Dorsolateral prefrontal cortex (tissue), 120 donors: ENCODE measurements at regions of chr7 and their contacts with region 1.

Region 1: GRCh38 chr7:134140889-134141867 is 14.0 kb downstream of the LRGUK start:
- DNase-seq: peak; percentile 64 to 84 (median 78)
- H3K4me3 ChIP-seq: peak overlapping the region in 44 of 59 donors; percentile 5 to 62 (median 38)
- H3K27ac ChIP-seq: no peak overlapping the region
- H3K27me3 ChIP-seq: no peaks in the 10 kb centered on the region
- CTCF ChIP-seq: peak in 55 of 56 donors; percentile 71 to 96 (median 89)

Region 2: DNA sequence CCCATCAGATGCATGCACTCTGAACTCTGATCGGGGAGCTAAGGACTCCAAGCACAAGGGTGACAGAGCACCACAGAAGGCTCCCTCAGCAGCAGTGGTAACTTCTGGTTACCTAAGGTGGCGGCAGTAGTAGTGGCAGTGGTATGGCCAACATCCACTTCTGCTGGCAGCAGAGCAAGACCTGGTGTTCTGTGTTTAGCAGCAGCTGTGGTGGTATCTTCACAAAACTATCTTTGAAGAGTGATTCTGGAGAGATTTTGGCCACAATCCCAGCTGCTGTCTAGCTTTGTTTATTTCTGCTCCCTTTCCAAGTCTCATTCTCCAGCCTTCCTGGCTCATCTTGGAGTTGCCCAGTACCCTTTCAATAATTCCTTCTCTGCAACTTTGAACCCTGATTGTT is 116.4 kb before region 1 on chr7:
- intact Hi-C with region 1: loop called in 1 of 2 experiments (anchors 5 kb)
- DNase-seq: no peak
- H3K4me3 ChIP-seq: no peak overlapping the region
- H3K27ac ChIP-seq: no peak overlapping the region
- H3K27me3 ChIP-seq: no peaks in the 10 kb centered on the region
- CTCF ChIP-seq: no peak

Region 3: DNA sequence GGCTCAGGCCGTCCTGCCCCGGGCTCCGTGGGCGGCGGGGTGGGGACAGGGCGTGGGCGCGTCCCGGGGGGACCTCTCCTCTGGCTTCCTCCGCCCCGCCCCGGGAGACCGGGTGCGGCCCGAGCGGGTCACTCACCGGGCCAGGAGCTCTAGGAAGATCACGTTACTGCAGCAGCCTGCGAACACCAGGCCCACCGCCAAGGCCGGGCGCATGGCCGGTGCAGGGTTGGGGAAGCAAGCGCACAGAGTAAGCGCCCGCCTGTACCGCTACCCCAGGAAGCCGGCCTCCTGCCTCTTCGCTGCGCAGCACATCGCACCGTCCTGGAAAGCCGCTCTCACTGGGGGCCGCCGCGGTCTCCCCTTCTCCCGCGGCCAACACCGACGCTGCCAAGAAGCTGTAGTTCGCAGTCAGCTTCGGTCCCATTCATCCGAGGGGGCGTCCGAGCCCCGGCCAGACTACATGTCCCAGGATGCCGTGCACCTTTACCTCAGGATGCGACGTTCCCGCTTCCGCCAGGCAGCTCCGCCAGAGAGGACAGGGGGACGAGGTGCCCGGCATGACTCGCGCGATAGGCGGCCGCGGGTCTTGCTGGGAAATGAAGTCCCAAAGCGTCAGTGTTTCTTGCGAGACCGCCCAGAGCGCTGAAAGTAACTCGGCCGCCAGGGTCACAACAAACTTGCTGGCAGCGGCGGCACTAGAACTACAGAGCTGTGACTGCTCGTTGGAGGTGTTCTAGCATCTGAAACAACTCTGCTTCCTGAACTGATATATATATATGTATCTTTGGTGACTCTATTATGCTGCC is 175.6 kb after region 1 on chr7 and contains the start of gene SLC35B4:
- intact Hi-C with region 1: loop called in 1 of 2 experiments (anchors 10 kb)
- DNase-seq: peak; percentile 96 to 99 (median 98)
- H3K4me3 ChIP-seq: peak within 1 kb of the TSS; percentile 64 to 100 (median 93)
- H3K27ac ChIP-seq: peak within 1 kb of the TSS in 57 of 59 donors; percentile 2 to 91 (median 79)
- H3K27me3 ChIP-seq: no peaks in the 10 kb centered on the region
- CTCF ChIP-seq: peak in 53 of 56 donors; percentile 13 to 73 (median 46)
- total RNA-seq, gene SLC35B4: 19.9 to 60.3 (median 38.4) TPM

Region 4: GRCh38 chr7:134420424-134421125 is 279.4 kb after region 1 on chr7:
- intact Hi-C with region 1: loop called in 1 of 2 experiments (anchors 10 kb)
- DNase-seq: peak in 6 of 10 donors; percentile 39 to 78 (median 56)
- H3K4me3 ChIP-seq: peak overlapping the region in 46 of 59 donors; percentile 9 to 58 (median 37)
- H3K27ac ChIP-seq: peak overlapping the region in 1 of 59 donors; percentile 42
- H3K27me3 ChIP-seq: no peaks in the 10 kb centered on the region
- CTCF ChIP-seq: peak in 55 of 56 donors; percentile 51 to 87 (median 72)